Endothelial cell of umbilical vein (primary cell): ENCODE measurements at regions of chr16 and their contacts with region 1.

Region 1: DNA sequence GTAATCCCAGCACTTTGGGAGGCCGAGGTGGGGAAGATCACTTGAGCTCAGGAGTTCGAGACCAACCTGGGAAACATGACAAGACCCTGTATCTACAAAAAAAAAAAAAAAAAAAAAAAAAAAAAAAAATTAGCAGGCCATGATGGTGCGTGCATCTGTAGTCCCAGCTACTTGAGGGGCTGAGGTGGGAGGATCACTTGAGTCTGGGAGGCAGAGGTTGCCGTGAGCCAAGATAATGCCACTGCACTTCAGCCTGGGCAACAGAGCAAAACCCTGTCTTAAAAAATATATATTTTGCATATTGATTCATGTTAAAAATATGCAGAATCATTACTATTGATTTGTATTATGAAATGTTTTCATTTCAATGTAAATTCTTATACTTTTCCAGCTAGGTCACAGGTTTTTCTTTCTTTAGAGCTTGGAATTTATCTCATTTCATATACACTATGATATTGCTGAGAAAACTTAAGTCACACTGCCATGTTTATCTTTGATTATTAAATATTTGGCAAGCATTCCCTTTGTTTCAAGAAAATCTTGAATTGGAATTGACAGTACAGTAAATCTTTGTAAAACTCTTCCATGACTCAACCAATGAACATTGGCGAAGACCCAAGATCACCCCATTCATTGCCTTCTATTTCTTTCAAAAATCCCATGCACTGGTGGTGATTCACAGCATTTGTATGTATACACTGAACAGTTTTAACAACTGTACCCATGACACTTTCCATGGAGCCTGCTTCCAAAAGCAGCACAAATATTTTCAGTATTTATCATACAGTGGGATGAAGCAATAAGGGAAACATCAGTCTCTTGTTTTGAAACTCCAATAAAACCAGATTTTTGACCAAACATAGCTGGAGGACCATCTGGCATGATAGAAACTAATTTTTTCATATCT is 83.5 kb upstream of the TNRC6A start:
- DNase-seq: peak; percentile 99
- H3K4me3 ChIP-seq: no peak overlapping the region
- H3K27ac ChIP-seq: peak overlapping the region; percentile 71
- H3K4me1 ChIP-seq: peaks cover 14% of the 10 kb centered on the region
- H3K27me3 ChIP-seq: no peaks in the 10 kb centered on the region
- CTCF ChIP-seq: no peak
- POLR2A ChIP-seq: no peak

Region 2: DNA sequence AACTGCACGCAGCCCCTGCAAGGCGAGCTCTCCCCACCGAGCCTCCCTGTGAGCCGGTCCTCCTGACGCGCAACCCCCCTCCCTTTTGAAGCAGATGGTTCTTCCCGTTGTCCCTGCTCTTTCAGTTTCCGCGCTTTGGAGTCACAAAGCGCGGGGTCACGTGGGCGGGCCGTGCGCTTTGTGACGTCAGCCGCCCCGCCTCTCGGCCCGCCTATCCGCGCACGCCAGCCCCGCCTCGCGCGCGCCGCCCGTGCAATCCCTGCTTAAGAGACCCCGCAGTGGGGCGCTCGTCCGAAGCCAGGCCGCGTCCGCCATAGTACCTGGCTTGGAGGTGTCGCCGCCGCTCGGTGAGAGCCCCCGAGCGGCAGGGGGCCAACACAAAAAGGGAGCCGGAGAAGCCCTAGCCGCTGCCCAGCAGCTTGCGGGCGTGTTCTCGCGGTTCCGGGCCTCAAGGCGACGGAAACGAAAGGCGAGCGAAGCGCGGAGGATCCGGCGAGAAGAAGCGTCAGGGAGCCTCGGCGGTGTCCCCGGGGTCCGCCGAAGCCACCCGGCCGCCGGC is 106.6 kb before region 1 on chr16 and contains the start of gene RBBP6:
- CTCF ChIA-PET with region 1: no interaction called
- POLR2A ChIA-PET with region 1: no interaction called
- dilution Hi-C with region 1: no loop called
- intact Hi-C with region 1: loop called (anchors 1 kb)
- DNase-seq: peak; percentile 98
- H3K4me3 ChIP-seq: peak within 1 kb of the TSS; percentile 80 to 94 (median 88)
- H3K27ac ChIP-seq: peak within 1 kb of the TSS; percentile 96
- H3K4me1 ChIP-seq: peaks cover 36% of the 10 kb centered on the region
- H3K27me3 ChIP-seq: no peaks in the 10 kb centered on the region
- CTCF ChIP-seq: peak in 1 of 2 donors; percentile 28
- POLR2A ChIP-seq: peak; percentile 93
- total RNA-seq, gene RBBP6: 49.2 and 52.1 TPM in 2 replicates